ENCODE measurements at regions of chr17 and their contacts with region 1.

Region 1: DNA sequence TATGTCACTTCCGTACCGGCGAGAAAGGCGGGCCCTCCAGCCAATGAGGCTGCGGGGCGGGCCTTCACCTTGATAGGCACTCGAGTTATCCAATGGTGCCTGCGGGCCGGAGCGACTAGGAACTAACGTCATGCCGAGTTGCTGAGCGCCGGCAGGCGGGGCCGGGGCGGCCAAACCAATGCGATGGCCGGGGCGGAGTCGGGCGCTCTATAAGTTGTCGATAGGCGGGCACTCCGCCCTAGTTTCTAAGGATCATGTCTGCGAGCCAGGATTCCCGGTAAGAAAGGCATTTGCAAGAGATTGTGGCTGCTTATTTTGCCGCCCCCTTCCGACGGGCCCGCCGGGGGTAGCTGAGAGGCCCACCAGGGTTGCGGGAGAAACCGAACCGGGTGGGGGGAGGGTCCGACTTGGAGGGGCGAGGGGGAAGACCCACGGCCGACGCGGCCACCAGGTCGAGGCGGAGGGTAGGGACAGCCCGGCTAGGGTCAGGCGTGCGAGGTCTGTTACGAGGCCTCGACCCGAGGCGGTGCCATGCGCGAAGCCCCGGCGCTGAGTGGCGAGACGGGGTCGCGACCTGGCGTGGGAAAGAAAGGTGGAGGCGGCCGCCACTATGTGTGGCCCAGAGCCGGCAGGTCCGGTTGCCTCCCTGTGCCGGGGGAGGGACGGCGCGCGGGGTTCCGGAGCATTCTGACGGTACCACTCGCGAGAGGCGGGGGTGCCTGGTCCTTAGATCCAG is 6.7 kb upstream of the CD68 start:
- DNase-seq: peak; percentile 99
- ATAC-seq: peak; percentile 92
- H3K4me3 Mint-ChIP-seq: peak overlapping the region; percentile 98
- H3K27ac Mint-ChIP-seq: peak overlapping the region; percentile 100
- H3K4me1 Mint-ChIP-seq: peaks cover 45% of the 10 kb centered on the region
- H3K27me3 Mint-ChIP-seq: peaks cover 1% of the 10 kb centered on the region
- CTCF ChIP-seq: no peak

Region 2: DNA sequence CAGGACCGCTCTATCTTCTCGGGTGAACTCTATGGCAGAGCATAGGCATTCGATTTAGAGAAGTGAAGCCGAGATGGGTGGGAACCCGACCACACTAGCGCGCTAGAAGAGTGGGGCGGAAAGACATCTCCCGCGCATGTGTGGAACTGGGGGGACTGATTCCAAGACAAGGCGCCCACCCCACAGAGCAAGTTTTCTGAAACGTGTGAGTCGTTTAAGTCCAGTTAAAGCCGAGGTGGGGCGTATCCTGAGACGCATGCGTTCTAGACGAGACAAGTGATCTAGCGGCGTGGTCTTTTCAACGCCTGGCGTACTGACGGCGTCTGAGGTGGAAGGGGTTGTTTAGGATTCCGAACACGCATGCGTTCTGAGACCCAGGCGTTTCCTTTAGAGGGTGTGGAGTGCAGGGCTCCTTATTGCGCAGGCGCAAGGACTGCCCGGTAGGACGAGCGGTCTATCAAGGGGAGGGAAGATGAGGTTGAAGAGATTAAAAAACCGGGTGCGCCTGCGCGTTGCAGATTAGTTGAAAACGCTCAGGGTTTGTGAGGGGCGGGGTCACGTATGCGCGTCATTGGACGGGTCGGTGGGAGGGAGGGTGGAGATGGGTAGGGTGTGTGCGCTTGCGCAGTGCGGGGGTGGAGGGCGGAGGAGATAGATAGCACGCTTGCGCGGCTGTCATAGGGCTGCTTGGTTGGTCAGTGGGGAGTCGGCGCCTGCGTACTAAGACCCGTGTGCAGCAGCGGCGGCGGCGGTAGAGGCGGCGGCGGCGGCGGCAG is 265.7 kb before region 1 on chr17 and contains the start of gene EIF5A:
- CTCF ChIA-PET with region 1: no interaction called
- POLR2A ChIA-PET with region 1: interaction called, 20 read pairs
- intact Hi-C with region 1: no loop called
- DNase-seq: peak; percentile 100
- ATAC-seq: peak; percentile 84
- H3K4me3 Mint-ChIP-seq: peak within 1 kb of the TSS; percentile 94
- H3K27ac Mint-ChIP-seq: peak within 1 kb of the TSS; percentile 98
- H3K4me1 Mint-ChIP-seq: peaks cover 38% of the 10 kb centered on the region
- H3K27me3 Mint-ChIP-seq: no peaks in the 10 kb centered on the region
- CTCF ChIP-seq: no peak
- total RNA-seq, gene EIF5A: 1,064 TPM

Region 3: GRCh38 chr17:7314719-7315569 is 257.8 kb before region 1 on chr17 and contains the start of gene GPS2:
- CTCF ChIA-PET with region 1: no interaction called
- POLR2A ChIA-PET with region 1: interaction called, 29 read pairs
- intact Hi-C with region 1: no loop called
- DNase-seq: peak; percentile 96
- ATAC-seq: peak; percentile 82
- H3K4me3 Mint-ChIP-seq: peak within 1 kb of the TSS; percentile 88
- H3K27ac Mint-ChIP-seq: peak within 1 kb of the TSS; percentile 89
- H3K4me1 Mint-ChIP-seq: peaks cover 45% of the 10 kb centered on the region
- H3K27me3 Mint-ChIP-seq: no peaks in the 10 kb centered on the region
- CTCF ChIP-seq: no peak
- total RNA-seq, gene GPS2: 31.8 to 36.8 TPM

Region 4: DNA sequence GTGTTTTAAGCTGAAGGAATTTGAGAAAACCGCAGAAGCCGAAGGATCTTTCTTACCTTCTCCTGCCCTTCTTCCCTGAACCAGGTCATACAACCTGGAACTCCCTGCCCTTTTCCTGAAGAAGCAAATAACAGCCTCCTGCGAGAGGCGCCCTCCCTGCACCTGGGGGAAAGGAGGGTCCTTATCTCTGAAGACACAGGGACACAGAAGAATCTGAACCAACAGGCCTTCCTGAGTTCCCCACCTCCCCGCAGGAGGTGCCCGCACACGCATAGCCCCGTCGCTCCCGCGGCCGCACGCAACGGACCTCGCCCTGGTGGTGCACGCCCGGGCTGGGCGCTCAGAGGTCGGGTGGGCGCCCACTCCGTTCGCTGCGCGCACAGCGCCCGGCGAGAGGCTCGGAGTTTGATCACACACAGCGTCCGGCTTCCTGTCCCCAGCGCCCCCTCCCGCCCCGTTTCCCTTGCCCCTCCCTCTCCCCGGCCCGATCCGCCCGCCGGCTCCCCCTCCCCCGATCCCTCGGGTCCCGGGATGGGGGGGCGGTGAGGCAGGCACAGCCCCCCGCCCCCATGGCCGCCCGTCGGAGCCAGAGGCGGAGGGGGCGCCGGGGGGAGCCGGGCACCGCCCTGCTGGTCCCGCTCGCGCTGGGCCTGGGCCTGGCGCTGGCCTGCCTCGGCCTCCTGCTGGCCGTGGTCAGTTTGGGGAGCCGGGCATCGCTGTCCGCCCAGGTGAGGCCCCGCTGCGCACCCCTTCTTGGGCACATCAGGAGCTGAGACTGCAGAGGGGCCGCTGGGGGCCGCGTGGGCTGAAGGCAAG is 24.0 kb before region 1 on chr17 and contains the start of gene TNFSF12:
- CTCF ChIA-PET with region 1: no interaction called
- POLR2A ChIA-PET with region 1: interaction called, 14 read pairs
- intact Hi-C with region 1: no loop called
- DNase-seq: peak; percentile 76
- ATAC-seq: peak; percentile 56
- H3K4me3 Mint-ChIP-seq: peak within 1 kb of the TSS; percentile 82
- H3K27ac Mint-ChIP-seq: peak within 1 kb of the TSS; percentile 77
- H3K4me1 Mint-ChIP-seq: peaks cover 54% of the 10 kb centered on the region
- H3K27me3 Mint-ChIP-seq: no peaks in the 10 kb centered on the region
- CTCF ChIP-seq: no peak
- total RNA-seq, gene TNFSF12: 11.8 to 13.8 TPM

Region 5: DNA sequence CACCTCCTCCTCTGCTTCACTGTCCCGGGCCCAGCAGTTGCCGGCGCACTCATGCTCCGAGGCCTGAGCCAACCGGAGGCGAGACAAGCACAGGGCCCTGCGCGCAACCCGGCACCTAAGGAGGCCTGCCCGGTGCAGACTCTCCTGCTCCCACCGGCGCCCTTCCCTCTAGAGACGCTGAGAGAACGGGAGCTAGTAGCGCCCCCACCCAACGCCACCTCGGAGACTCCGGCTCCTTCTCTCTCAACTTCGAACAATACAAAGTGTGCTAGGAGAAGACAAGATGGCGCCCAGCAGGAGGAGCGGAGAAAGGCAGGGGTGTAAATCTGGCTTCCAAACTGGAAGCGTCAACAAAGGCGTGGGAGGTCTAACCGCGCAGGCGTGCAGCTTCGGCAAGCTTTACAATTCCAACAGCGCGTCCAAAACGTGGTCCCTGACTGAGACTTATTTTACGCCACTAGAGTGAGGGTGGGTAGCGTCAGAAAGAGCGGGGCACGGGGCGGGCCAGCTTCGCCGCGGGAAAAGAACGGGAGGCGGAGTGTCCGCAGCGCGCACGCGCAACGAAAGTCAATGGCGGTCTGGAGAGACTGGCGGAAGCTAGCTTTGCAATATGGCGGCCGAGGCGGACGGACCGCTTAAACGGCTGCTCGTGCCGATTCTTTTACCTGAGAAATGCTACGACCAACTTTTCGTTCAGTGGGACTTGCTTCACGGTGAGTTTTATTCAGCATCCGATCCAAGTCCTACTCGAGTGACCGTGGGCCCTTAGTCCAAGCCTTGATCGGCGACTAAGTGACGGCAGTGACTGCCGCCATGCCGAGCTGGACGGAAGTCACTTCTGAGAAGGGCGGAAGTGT is 10.7 kb after region 1 on chr17 and contains the start of gene MPDU1:
- CTCF ChIA-PET with region 1: interaction called, 4 read pairs
- POLR2A ChIA-PET with region 1: interaction called, 195 read pairs
- intact Hi-C with region 1: no loop called
- DNase-seq: peak; percentile 97
- ATAC-seq: peak; percentile 77
- H3K4me3 Mint-ChIP-seq: peak within 1 kb of the TSS; percentile 94
- H3K27ac Mint-ChIP-seq: peak within 1 kb of the TSS; percentile 99
- H3K4me1 Mint-ChIP-seq: peaks cover 55% of the 10 kb centered on the region
- H3K27me3 Mint-ChIP-seq: no peaks in the 10 kb centered on the region
- CTCF ChIP-seq: no peak
- total RNA-seq, gene MPDU1: 50.9 to 51.4 TPM

Region 6: GRCh38 chr17:7644775-7645174 is 72.0 kb after region 1 on chr17:
- CTCF ChIA-PET with region 1: no interaction called
- POLR2A ChIA-PET with region 1: no interaction called
- intact Hi-C with region 1: no loop called
- DNase-seq: no peak
- ATAC-seq: no peak
- H3K4me3 Mint-ChIP-seq: no peak overlapping the region
- H3K27ac Mint-ChIP-seq: no peak overlapping the region
- H3K4me1 Mint-ChIP-seq: peaks cover 3% of the 10 kb centered on the region
- H3K27me3 Mint-ChIP-seq: peaks cover 7% of the 10 kb centered on the region
- CTCF ChIP-seq: no peak

Region 7: DNA sequence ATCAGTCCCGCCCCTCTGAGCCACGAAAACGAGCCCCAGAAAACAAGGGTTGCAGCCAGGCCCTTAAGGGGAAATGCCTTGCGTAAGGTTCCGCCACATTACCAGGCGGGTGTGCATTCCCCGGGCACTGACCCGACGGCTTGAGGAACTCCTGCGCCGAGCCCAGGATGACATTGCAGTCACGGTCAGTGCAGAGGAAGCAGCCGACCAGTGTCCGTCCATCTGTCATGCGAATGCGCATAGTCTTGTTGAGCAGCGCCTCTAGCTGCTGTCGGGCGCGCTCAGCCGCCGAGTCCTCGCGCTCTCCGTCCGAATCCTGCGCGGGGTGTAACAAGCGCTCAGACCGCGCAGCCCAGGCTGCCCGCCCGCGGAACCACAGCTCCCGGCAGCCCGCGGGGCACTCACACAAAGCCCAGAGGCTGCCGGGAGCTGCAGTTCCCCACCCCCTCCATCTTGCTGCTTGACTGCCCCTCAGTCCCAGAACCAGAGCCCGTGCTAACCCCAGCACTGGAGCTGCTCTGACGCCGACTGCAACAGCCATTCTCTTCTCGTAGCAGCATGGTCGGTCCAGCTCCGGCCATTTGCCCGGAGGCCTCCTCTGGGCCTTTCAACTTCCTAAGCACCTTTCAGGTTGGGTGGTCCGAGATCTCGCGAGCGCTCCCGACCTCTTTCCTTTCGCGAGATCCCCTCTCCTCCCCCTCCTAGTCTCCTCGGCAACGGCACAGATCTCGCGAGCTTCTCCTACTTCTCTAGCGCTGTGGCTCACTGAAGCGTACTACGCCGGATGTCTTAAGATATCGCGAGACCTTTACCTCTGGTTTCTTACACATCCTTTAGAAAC is 284.3 kb after region 1 on chr17 and contains the start of gene NAA38:
- CTCF ChIA-PET with region 1: no interaction called
- POLR2A ChIA-PET with region 1: interaction called, 3 read pairs
- intact Hi-C with region 1: loop called (anchors 10 kb)
- DNase-seq: peak; percentile 98
- ATAC-seq: peak; percentile 90
- H3K4me3 Mint-ChIP-seq: no peak within 1 kb of the TSS
- H3K27ac Mint-ChIP-seq: no peak within 1 kb of the TSS
- H3K4me1 Mint-ChIP-seq: peaks cover 33% of the 10 kb centered on the region
- H3K27me3 Mint-ChIP-seq: no peaks in the 10 kb centered on the region
- CTCF ChIP-seq: no peak
- total RNA-seq, gene NAA38: 72.8 to 77.2 TPM